ENCODE measurements at regions of chr7 and their contacts with region 1.

Region 1: DNA sequence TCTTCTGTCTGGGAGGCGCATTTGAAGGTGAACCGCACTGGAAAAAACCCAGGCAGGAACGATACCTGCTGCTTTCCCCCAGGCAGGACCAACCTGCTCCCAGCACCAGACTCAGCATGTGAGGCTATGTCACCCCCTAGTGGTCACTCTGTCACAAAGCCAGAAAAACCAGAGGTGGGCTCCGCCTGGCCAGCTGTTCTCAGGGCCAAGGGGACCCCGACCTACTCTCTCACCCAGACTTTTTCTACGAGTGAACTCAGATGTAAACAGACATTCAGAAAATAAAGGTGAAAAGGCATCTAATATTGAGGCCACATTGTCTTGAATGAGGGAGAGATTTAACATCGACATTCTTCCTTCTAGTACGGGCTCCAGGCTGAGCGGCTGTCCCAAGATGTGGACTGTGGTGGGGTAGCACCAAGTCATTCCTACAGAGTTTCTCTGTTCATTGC is 117.3 kb downstream of the PRKAG2 start:
- DNase-seq: no peak
- H3K4me3 ChIP-seq: no peak overlapping the region
- CTCF ChIP-seq: peak; percentile 86

Region 2: DNA sequence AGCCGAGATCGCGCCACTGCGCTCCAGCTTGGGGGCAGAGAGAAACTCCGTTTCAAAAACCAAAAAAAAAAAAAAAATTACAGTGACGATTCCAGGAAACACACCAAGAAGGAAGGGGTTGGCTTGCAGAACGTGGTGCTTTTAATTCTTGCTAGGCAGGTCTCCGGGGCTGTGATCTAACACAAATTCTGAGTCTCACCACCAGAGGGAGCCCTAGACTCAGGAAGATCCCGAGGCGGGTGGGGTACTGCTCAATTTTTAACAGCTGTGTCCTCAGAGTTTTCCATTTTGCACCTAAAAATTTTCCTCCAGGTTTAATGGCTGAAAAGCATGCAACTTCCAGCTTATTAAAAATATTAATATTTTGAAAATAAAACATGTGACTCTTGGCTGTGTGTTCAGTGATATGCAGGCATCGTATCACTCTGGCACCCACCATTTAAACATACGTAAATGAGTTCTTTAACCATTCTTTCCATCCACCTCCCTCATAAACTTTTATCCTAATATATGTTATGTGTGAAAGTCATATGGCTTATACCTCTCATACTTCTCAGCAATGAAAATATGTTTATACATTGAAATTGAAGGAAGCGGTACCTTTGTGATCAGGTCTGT is 444.5 kb before region 1 on chr7:
- CTCF ChIA-PET with region 1: interaction called, 60 read pairs
- POLR2A ChIA-PET with region 1: no interaction called
- DNase-seq: no peak
- H3K4me3 ChIP-seq: no peak overlapping the region
- CTCF ChIP-seq: peak; percentile 63

Region 3: GRCh38 chr7:151390598-151391357 is 368.8 kb before region 1 on chr7:
- CTCF ChIA-PET with region 1: no interaction called
- POLR2A ChIA-PET with region 1: no interaction called
- DNase-seq: no peak
- H3K4me3 ChIP-seq: no peak overlapping the region
- CTCF ChIP-seq: no peak

Region 4: GRCh38 chr7:151448261-151449252 is 311.1 kb before region 1 on chr7:
- CTCF ChIA-PET with region 1: interaction called, 48 read pairs
- POLR2A ChIA-PET with region 1: no interaction called
- DNase-seq: no peak
- H3K4me3 ChIP-seq: peak overlapping the region; percentile 54
- CTCF ChIP-seq: peak; percentile 82

Region 5: GRCh38 chr7:151491859-151492258 is 267.8 kb before region 1 on chr7:
- CTCF ChIA-PET with region 1: interaction called, 20 read pairs
- POLR2A ChIA-PET with region 1: no interaction called
- DNase-seq: peak; percentile 62
- H3K4me3 ChIP-seq: no peak overlapping the region
- CTCF ChIP-seq: no peak

Region 6: GRCh38 chr7:151631968-151632749 is 127.5 kb before region 1 on chr7:
- CTCF ChIA-PET with region 1: interaction called, 94 read pairs
- POLR2A ChIA-PET with region 1: no interaction called
- DNase-seq: no peak
- H3K4me3 ChIP-seq: peak overlapping the region; percentile 85
- CTCF ChIP-seq: peak; percentile 41

Region 7: DNA sequence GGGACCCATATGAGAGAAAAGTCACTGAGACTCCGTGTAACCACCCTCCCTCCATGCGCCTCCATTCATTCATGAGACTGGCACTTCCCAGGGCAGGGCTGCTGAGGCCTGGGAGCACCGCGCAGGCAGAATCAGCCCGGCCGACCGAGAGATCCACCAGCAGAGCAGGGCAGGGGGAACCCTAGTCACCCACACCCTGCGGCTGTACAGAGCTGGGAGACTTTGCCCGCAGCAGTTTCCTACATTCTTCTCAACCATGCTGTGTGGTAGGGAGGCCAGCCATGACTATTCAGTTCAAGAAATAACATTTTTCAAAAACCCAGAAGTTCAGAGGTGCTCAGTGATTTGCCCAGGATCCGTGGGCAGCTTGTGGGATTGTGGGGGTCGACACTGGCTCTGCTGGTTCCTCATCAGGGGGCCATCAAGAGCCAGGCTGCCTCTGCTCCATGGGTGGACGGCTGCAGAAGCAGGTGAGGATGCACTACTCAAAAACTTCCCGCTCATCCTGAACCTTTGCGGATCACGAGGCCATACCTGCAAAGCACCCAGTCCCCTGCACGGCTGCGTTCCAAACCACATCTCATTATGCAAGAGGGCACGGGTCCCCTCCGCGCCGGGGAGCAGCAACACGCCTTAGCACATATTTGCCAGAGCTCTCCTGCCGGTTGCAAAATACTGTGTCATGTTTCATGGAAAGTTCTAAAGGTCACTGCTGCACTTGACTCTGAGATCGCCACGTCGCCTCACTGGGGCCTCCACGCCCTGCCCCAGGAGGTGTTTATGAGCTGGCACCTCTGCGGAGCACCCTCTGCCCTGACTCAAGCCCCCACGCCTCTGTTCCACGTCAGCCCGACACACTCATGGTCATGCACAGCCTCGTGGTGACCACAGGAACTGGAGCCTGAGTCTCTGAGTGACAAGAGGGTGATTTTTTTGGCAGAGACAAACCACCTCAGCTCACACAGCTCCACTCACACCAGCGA is 14.7 kb before region 1 on chr7:
- CTCF ChIA-PET with region 1: interaction called, 113 read pairs
- POLR2A ChIA-PET with region 1: interaction called, 3 read pairs
- DNase-seq: no peak
- H3K4me3 ChIP-seq: no peak overlapping the region
- CTCF ChIP-seq: peak; percentile 61